Natural killer cell (primary cell): ENCODE measurements at regions of chr10 and their contacts with region 1.

Region 1: DNA sequence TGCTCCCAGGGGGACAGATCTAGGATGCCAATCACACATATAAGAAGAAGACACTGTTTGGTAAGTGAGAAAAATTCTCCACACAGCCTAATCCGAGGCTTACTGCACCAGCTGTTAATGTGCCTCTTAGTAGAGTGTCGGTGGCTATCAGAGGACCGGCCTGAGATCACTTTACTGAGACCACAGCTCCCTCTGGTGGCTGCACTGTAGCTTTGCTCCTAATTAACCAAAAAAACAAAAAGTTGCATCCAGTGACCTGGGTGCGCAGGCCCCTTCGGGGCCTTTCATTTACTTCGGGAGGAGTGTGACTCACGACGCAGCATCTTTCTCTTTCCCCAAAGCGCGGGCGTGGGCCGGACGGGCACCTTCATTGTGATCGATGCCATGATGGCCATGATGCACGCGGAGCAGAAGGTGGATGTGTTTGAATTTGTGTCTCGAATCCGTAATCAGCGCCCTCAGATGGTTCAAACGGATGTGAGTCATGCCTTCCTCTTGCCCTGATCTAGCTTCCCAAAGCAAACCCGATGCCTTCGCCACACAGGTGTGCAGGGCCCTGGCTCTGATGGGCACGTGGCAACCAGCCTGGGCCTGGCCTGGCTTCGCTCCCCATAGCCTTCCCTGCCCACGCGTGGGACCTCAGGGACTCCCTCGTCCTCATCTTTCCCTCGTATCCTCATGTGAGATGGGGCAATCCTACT is 56.7 kb downstream of the MKI67 start:
- DNase-seq: peak; percentile 78 to 93
- ATAC-seq: peak; percentile 50 to 78 (median 57)
- H3K4me3 ChIP-seq: no peak overlapping the region
- H3K4me3 Mint-ChIP-seq: peak overlapping the region; percentile 42
- H3K27ac ChIP-seq: no peak overlapping the region
- H3K27ac Mint-ChIP-seq: peak overlapping the region; percentile 61 to 72
- H3K4me1 ChIP-seq: peaks cover 57% of the 10 kb centered on the region
- H3K4me1 Mint-ChIP-seq: peaks cover 62 to 63% of the 10 kb centered on the region in 2 donors
- H3K27me3 ChIP-seq: no peaks in the 10 kb centered on the region
- H3K27me3 Mint-ChIP-seq: no peaks in the 10 kb centered on the region
- CTCF ChIP-seq: peak; percentile 81

Region 2: DNA sequence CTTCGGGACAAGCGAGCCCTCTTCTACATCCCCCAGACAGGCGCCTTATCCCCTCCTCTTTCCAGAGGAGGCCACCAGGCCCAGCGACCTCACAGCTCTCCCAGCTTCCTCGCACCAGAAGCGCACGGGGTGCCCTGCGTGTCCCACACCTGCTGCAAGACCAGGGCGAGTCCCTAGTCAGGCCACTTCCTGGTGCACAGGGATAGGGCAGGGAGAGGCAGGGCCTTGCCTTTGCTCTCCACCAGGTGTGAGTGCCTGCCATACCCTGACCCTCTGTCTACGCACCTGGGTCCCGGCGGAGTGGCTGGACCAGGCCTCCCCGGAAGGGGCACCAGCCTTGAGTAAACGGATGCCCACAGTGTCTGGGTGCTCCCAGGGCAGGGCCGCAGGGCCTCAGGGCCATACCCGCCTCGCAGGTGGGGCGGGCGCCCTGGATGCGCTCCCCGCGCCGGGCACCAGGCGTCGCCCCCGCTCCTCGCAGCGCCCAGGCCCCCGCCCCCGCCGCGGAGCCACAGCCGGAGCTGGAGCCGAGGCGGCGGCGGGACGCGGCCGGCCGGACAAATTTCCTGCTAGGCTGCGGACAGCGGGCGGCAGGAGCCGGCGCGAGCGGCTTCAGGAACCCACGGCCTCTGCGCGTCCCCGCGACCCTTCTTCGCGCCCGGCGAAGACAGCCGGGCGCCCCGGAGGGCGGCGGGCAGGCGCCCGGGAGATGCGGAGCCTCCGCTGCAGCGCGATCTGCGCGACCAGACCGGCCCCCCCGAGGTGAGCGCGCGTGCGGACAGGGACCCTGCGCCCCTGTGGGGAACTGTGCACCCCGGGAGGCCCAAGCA is 162.7 kb before region 1 on chr10 and contains the start of gene PTPRE:
- intact Hi-C with region 1: loop called (anchors 2 kb)
- DNase-seq: peak; percentile 74 to 75
- ATAC-seq: peak; percentile 91 to 99 (median 98)
- H3K4me3 ChIP-seq: no peak within 1 kb of the TSS
- H3K4me3 Mint-ChIP-seq: peak within 1 kb of the TSS; percentile 49
- H3K27ac ChIP-seq: no peak within 1 kb of the TSS
- H3K27ac Mint-ChIP-seq: no peak within 1 kb of the TSS
- H3K4me1 ChIP-seq: peaks cover 10% of the 10 kb centered on the region
- H3K4me1 Mint-ChIP-seq: no peaks in the 10 kb centered on the region
- H3K27me3 ChIP-seq: peaks cover 11% of the 10 kb centered on the region
- H3K27me3 Mint-ChIP-seq: peaks cover 39 to 65% of the 10 kb centered on the region in 2 donors
- CTCF ChIP-seq: peak; percentile 73
- total RNA-seq, gene PTPRE: 274 to 280 (median 275) TPM

Region 3: GRCh38 chr10:128035557-128035973 is 33.9 kb before region 1 on chr10:
- intact Hi-C with region 1: loop called (anchors 1 kb)
- DNase-seq: peak; percentile 72 to 80
- ATAC-seq: peak; percentile 88 to 97 (median 97)
- H3K4me3 ChIP-seq: no peak overlapping the region
- H3K4me3 Mint-ChIP-seq: no peak overlapping the region
- H3K27ac ChIP-seq: no peak overlapping the region
- H3K27ac Mint-ChIP-seq: peak overlapping the region in 1 of 2 donors; percentile 53
- H3K4me1 ChIP-seq: peaks cover 6% of the 10 kb centered on the region
- H3K4me1 Mint-ChIP-seq: peaks cover 0 to 14% of the 10 kb centered on the region in 2 donors
- H3K27me3 ChIP-seq: no peaks in the 10 kb centered on the region
- H3K27me3 Mint-ChIP-seq: no peaks in the 10 kb centered on the region
- CTCF ChIP-seq: peak; percentile 92

Region 4: DNA sequence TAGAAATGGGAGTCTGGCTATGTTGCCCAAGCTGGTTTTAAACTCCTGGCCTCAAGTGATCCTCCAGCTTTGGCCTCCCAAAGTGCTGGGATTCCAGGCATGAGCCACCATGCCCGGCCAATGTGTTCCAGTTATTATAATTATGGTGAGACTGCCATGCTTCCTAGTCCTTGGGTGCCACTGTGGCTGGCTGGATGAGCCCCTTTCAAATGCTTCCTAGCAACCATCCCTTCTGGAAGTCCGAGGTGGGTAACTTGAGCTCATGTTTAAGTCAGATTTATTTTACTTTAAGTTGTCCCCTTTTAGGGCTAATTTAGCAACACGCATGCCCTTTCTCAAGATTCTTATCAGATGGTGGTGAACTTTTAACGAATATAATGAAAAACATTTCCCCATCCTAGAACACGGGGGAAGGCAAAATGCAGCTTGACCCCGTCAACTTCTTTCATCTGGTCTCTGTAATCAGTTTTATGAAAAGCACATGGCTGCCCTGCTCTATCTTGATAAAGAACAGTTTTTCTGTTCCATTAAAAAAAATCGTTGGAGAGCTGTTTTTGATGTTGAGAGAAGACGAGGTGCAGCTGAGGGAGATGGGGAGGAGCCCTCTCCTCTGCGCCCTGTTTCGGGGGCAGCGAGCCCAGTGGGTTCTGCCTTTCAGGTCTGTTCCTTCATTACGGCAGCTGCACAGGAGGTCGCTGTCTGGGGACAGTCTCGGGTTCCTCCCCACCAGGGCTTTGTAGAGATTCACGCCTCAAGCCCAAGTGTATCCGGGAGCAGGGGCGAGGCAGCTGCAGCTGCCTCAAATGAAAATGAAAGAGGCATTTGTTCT is 117.7 kb after region 1 on chr10:
- intact Hi-C with region 1: no loop called
- DNase-seq: peak; percentile 21 to 60
- ATAC-seq: peak; percentile 83 to 97 (median 88)
- H3K4me3 ChIP-seq: peak overlapping the region; percentile 20
- H3K4me3 Mint-ChIP-seq: peak overlapping the region; percentile 93
- H3K27ac ChIP-seq: peak overlapping the region; percentile 55
- H3K27ac Mint-ChIP-seq: peak overlapping the region; percentile 95 to 96
- H3K4me1 ChIP-seq: peaks cover 22% of the 10 kb centered on the region
- H3K4me1 Mint-ChIP-seq: peaks cover 27 to 35% of the 10 kb centered on the region in 2 donors
- H3K27me3 ChIP-seq: no peaks in the 10 kb centered on the region
- H3K27me3 Mint-ChIP-seq: no peaks in the 10 kb centered on the region
- CTCF ChIP-seq: no peak

Region 5: DNA sequence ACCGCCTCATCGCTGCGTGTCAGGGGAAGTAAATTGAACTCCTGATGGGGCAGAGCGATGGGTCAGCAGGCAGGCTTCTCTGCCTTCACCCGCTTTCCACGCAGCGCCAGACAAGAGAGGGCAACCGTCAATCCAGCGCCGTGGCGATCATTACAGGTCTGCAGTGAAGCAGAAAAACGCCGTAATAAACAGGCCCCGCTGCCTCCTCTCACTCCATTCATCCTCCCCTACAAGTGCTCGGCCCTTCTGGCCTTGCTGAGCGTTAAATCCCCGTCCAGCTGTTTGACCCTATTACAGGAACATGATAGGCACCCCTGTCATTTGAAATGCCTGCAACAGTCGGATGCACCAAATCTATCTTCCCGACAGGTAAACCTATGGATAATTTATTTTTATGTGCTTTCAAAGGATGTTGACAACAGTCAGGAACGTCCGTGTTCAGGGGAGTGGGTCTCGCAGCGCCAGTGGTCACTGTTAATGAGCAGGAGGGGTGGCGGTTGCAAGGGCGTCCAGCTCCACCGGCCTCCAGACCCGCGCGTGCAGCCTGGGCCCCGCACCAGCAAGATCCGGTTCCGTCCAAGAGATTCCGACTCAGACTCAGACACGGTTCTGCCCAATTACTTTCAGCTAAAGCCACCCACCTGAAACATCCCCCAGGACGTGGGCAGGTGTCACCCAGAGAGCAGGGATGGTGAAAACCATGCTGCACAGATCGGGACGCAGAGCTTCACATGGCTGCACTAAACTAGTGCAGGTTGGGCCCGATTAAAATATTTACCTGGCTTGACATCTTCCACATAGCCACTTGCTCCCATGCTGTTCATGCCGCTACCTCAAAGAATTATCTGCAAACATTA is 889.6 kb after region 1 on chr10:
- intact Hi-C with region 1: no loop called
- DNase-seq: no peak
- ATAC-seq: no peak
- H3K4me3 ChIP-seq: no peak overlapping the region
- H3K4me3 Mint-ChIP-seq: no peak overlapping the region
- H3K27ac ChIP-seq: no peak overlapping the region
- H3K27ac Mint-ChIP-seq: no peak overlapping the region
- H3K4me1 ChIP-seq: no peaks in the 10 kb centered on the region
- H3K4me1 Mint-ChIP-seq: no peaks in the 10 kb centered on the region
- H3K27me3 ChIP-seq: no peaks in the 10 kb centered on the region
- H3K27me3 Mint-ChIP-seq: no peaks in the 10 kb centered on the region
- CTCF ChIP-seq: no peak